ENCODE measurements at regions of chr10 and their contacts with region 1.

Region 1: GRCh38 chr10:77943121-77943901 is 16.8 kb upstream of the DLG5 start:
- DNase-seq: peak; percentile 24

Region 2: GRCh38 chr10:77582710-77583115 is 360.6 kb before region 1 on chr10:
- in situ Hi-C with region 1: no loop called
- DNase-seq: no peak

Region 3: GRCh38 chr10:77889277-77889903 is 53.9 kb before region 1 on chr10:
- in situ Hi-C with region 1: loop called (anchors 5 kb)
- DNase-seq: no peak

Region 4: DNA sequence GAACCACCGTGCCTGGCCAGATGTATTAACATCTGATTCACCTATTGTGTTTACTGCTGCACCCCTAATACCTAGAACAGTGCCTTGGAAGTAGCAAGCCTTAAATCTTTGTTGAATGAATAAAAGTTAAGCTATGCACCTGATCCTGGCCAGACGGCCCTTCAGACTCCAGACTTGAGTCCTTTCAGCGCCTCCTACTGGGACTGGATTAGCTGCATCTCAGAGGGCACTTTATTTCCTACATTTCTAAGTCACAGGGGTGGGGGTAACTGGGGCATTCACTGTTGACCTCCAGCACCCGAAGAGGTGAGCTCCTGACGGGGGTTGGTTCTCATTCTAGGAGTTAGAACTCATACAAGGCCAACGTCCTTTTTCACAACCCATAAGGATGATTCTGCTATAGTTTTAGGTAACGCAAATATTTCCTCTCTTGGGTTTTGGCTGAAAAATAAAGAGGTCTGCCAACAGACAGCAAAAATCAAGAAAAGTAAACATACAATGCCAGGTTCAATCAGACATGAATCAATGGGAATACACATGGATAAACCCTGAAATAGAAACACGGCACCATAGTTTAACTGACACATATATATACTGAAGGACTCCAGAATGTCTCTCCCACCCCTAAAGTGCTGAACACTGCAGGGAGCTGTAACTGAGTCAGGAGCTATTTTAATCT is 31.2 kb after region 1 on chr10:
- in situ Hi-C with region 1: no loop called
- DNase-seq: peak; percentile 33

Region 5: GRCh38 chr10:77989081-77989724 is 45.9 kb after region 1 on chr10:
- in situ Hi-C with region 1: no loop called
- DNase-seq: peak; percentile 91

Measured in G401 (cell line).